AG04449 (cell line): ENCODE measurements at regions of chr16 and their contacts with region 1.

Region 1: DNA sequence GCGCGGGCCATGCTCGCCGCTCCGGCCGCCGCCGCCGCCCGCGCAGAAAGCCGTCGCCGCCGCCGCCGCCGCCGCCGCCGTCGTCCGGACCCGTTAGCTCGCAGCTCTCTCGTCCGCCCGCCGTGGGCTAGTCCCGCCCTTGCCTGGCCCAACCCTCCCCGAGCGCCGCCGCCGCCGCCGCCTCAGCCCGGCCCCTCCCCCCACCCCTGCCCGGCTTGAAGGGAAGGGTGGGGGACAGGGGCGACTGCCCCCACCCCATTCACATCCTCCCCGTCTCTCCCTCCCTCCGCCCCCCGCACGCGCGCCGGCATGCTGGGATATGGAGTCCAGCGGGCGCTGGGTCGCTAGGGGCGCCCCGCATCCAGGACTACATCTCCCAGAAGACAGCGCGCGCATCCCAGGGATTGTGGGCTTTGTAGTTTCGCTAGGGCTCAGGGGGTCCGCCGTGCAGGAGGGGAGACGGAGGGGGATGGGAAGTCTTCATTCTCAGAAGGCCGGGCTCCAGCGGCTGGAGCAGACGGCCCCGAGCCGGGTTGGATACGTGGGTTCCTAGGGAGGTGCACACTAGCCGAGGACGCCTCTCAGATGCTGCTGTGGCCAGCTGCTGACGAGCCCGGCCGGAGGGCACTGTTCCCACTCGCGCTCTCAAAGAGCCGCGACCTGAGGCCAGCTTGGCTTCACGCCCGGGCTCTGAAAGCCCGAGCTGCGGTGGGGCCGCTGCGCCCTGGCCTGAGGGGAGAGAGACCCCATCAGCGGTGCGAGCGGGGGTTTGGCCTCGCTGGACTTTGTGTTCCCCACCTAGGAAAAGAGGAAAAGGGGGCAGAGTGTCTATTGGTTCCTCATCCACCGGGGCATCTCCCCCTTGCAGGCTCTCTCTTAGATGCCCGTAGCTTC is at the start of gene ST3GAL2:
- DNase-seq: no peak
- H3K4me3 ChIP-seq: peak within 1 kb of the TSS; percentile 92
- CTCF ChIP-seq: peak; percentile 38

Region 2: DNA sequence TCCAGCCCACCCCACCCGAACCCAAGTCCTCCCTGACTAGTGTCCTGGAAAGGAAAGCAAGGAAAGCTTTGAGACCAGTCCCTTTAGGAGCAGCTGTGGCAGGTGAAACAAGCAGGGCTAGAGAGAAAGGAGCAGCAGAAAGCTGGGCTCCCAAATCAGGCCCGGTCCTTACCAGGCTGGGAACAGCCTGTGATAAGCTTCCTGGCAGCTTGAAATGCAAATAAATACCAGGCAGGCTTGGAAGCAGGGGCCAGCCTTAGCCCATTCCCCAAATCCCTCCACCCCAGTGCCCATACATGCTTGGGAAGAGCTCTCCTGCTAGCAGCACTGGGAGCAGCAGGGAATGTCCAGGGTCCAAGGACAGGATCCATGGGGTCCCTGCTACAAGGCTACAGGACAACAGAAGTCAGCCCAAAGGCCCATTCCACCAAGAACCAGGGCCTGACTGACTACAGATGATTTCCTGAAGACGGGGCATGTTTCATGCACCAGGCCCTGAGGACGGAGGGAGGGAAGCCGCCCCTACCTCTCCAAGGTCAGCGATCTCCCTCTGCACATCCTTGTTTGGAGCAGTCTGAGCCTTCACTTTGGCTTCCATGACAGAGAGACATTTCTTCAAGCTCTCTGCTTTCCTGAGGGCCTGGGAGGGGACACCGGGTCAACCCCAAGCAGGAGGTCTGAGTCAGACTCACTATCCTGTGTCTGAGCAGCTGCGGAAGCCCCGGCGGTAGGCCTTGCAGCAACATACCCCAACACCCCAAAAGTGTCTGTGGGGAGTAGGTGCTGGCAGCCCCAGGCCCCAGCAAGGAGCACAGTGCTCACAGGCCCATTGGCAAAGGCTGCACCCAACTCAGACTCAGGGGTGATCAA is 184.9 kb before region 1 on chr16:
- CTCF ChIA-PET with region 1: no interaction called
- POLR2A ChIA-PET with region 1: no interaction called
- DNase-seq: no peak
- H3K4me3 ChIP-seq: no peak overlapping the region
- CTCF ChIP-seq: no peak

Region 3: DNA sequence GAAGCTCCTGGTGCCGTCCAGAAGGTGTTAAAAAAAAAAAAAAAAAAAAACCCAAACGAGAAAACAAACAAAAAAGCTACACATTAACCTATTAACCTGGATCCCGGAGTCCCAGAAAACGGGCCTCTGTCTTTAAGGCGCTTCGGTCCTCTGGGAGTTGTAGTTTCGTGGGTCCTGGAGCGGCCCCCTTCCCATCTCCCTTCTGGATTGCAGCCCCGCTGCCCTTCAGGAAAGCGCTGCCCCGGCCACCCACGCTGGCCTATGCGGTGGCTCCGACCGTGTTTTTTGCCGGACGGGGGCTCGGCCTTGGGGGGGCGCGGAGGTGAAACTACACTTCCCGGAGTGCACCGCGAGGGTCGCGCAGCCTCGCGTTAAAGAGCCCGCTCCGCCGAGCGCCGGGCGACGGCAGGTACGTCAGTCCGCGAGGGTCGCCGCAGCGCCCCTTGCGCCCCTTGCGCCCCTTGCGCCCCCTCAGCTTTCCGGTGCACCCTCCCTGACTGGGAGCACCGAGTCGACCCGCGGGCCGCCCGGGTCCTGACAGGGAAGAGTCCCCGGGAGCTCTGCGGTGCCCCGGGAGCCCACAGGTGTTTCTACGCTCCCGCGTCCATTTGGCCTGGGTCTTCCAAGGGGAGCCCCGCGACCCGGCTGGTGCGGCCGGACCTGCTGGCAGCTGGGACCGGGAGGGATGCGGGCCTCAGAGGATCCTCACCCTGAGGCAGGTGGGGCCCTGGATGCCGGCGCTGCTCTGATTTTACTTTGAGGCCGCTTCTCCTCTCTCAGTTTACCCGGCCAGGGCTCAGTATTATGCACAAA is 15.2 kb after region 1 on chr16 and contains the start of gene FCSK:
- CTCF ChIA-PET with region 1: interaction called, 10 read pairs
- POLR2A ChIA-PET with region 1: no interaction called
- DNase-seq: no peak
- H3K4me3 ChIP-seq: peak within 1 kb of the TSS; percentile 83
- CTCF ChIP-seq: no peak